ENCODE measurements at regions of chr6 and their contacts with region 1.

Region 1: GRCh38 chr6:161393839-161394364 is 120.0 kb upstream of the AGPAT4 start:
- DNase-seq: peak in 3 of 6 donors; percentile 33 to 69 (median 45)
- ATAC-seq: peak; percentile 85 to 97 (median 97)
- H3K4me3 ChIP-seq: no peak overlapping the region
- H3K27ac ChIP-seq: no peak overlapping the region
- H3K4me1 ChIP-seq: peaks cover 0 to 13% (median 0%) of the 10 kb centered on the region in 3 donors
- H3K27me3 ChIP-seq: no peaks in the 10 kb centered on the region
- CTCF ChIP-seq: peak in 3 of 4 donors; percentile 24 to 47 (median 35)

Region 2: DNA sequence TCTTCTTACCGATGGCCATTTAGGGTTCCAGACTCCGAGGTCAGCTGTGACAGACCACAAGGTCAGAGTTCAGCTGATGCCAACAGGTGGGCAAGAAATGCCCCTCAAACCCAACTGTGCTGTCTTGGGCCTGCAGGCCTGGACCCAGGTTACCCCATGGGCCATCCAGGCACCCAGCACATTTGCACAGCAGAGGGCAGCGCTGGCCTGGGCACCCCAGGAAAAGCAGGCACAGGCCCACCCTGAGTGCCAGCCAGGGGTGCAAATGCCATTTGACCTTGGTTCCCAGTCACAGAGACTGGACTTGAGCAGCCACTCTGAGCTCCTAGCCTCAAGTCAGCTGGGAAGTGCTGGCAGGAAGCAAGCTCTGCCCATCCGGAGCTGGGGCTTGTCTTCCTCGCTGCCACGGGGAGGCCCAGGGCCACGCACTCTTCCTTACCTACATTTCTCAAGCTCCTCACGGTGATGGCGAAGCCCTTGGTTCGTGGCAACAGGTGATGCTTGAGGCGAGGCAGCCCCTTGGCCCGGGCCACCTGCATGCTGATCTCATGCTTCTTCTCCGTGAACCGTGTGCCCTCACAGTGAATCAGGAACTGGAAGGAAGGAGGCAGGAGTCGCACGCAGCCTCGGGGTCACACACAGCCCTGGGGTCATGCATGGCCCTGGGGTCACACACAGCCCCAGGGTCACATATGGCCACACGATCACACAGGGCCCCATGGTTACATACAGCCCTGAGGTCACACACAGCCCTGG is 240.8 kb before region 1 on chr6:
- intact Hi-C with region 1: no loop called
- DNase-seq: no peak
- ATAC-seq: peak in 3 of 4 donors; percentile 55 to 70 (median 70)
- H3K4me3 ChIP-seq: no peak overlapping the region
- H3K27ac ChIP-seq: no peak overlapping the region
- H3K4me1 ChIP-seq: no peaks in the 10 kb centered on the region
- H3K27me3 ChIP-seq: no peaks in the 10 kb centered on the region
- CTCF ChIP-seq: peak in 1 of 4 donors; percentile 12

Region 3: GRCh38 chr6:161498359-161498758 is 104.5 kb after region 1 on chr6:
- intact Hi-C with region 1: loop called in 1 of 3 experiments (anchors 10 kb)
- DNase-seq: peak in 3 of 6 donors; percentile 24 to 33 (median 25)
- ATAC-seq: peak; percentile 64 to 95 (median 85)
- H3K4me3 ChIP-seq: no peak overlapping the region
- H3K27ac ChIP-seq: no peak overlapping the region
- H3K4me1 ChIP-seq: no peaks in the 10 kb centered on the region
- H3K27me3 ChIP-seq: no peaks in the 10 kb centered on the region
- CTCF ChIP-seq: no peak

Measured in pancreas (tissue), 10 donors.